Esophagus muscularis mucosa (tissue), 4 donors: ENCODE measurements at regions of chr12 and their contacts with region 1.

Region 1: GRCh38 chr12:54134850-54135249 is 53.9 kb downstream of the SMUG1 start:
- DNase-seq: no peak
- H3K4me3 ChIP-seq: no peak overlapping the region
- H3K27ac ChIP-seq: no peak overlapping the region
- H3K4me1 ChIP-seq: peaks cover 0 to 36% (median 25%) of the 10 kb centered on the region in 4 donors
- H3K27me3 ChIP-seq: no peaks in the 10 kb centered on the region
- CTCF ChIP-seq: peak in 2 of 3 experiments; percentile 3 to 14
- EP300 ChIP-seq: no peak
- POLR2A ChIP-seq: no peak

Region 2: GRCh38 chr12:53295070-53295890 is 839.6 kb before region 1 on chr12 and contains the start of gene PFDN5:
- intact Hi-C with region 1: no loop called
- DNase-seq: peak; percentile 97
- H3K4me3 ChIP-seq: peak within 1 kb of the TSS; percentile 73 to 88 (median 82)
- H3K27ac ChIP-seq: peak within 1 kb of the TSS; percentile 81 to 91 (median 84)
- H3K4me1 ChIP-seq: peaks cover 30 to 51% (median 47%) of the 10 kb centered on the region in 4 donors
- H3K27me3 ChIP-seq: no peaks in the 10 kb centered on the region
- CTCF ChIP-seq: peak; percentile 18 to 39 (median 22)
- EP300 ChIP-seq: no peak
- POLR2A ChIP-seq: peak; percentile 40
- total RNA-seq, gene PFDN5: 446 to 812 (median 631) TPM

Region 3: DNA sequence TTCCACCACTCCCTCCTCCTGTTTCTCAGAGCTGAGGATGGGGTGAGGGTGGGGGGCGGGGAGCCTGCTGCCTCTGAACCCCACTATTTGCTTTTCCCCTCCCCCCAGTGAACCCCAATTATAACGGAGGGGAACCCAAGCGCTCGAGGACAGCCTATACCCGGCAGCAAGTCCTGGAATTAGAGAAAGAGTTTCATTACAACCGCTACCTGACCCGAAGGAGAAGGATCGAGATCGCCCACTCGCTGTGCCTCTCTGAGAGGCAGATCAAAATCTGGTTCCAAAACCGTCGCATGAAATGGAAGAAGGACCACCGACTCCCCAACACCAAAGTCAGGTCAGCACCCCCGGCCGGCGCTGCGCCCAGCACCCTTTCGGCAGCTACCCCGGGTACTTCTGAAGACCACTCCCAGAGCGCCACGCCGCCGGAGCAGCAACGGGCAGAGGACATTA is 80.1 kb before region 1 on chr12:
- intact Hi-C with region 1: loop called (anchors 5 kb)
- DNase-seq: no peak
- H3K4me3 ChIP-seq: peak overlapping the region; percentile 74 to 88 (median 82)
- H3K27ac ChIP-seq: peak overlapping the region in 3 of 4 donors; percentile 79 to 82 (median 79)
- H3K4me1 ChIP-seq: peaks cover 13 to 55% (median 44%) of the 10 kb centered on the region in 4 donors
- H3K27me3 ChIP-seq: peaks cover 0 to 27% (median 0%) of the 10 kb centered on the region in 4 donors
- CTCF ChIP-seq: no peak
- EP300 ChIP-seq: no peak
- POLR2A ChIP-seq: no peak